ENCODE measurements at regions of chr1 and their contacts with region 1.

Region 1: GRCh38 chr1:92994105-92994712 is 32.9 kb upstream of the DIPK1A start:
- DNase-seq: peak; percentile 89
- ATAC-seq: peak; percentile 96
- H3K4me3 ChIP-seq: no peak overlapping the region
- H3K4me3 Mint-ChIP-seq: no peak overlapping the region
- H3K27ac ChIP-seq: no peak overlapping the region
- H3K27ac Mint-ChIP-seq: peak overlapping the region; percentile 76
- H3K4me1 ChIP-seq: peaks cover 35 to 41% of the 10 kb centered on the region in 2 donors
- H3K4me1 Mint-ChIP-seq: peaks cover 40% of the 10 kb centered on the region
- H3K27me3 ChIP-seq: no peaks in the 10 kb centered on the region
- H3K27me3 Mint-ChIP-seq: no peaks in the 10 kb centered on the region
- CTCF ChIP-seq: peak; percentile 87

Region 2: DNA sequence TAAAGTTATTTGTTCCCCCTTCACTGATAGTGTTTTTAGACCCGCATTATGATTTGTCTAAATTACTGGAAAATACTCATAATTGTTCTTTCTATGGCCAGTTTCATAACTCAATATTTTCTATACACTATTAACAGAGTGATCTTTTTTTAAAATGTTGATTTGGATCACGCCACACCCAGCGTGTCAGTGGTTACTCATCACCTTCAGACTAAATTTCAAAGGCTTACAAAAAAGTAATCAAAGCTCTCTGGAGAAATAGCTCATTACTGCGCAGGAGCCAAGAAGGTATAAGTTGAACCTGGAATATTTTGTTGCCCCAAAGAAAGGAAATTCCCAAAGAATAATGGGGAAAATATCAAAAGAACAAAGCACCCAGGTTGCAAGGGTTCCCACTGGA is 314.2 kb before region 1 on chr1:
- CTCF ChIA-PET with region 1: no interaction called
- POLR2A ChIA-PET with region 1: no interaction called
- intact Hi-C with region 1: no loop called
- DNase-seq: no peak
- ATAC-seq: no peak
- H3K4me3 ChIP-seq: no peak overlapping the region
- H3K4me3 Mint-ChIP-seq: no peak overlapping the region
- H3K27ac ChIP-seq: no peak overlapping the region
- H3K27ac Mint-ChIP-seq: no peak overlapping the region
- H3K4me1 ChIP-seq: no peaks in the 10 kb centered on the region
- H3K4me1 Mint-ChIP-seq: no peaks in the 10 kb centered on the region
- H3K27me3 ChIP-seq: no peaks in the 10 kb centered on the region
- H3K27me3 Mint-ChIP-seq: no peaks in the 10 kb centered on the region
- CTCF ChIP-seq: no peak

Region 3: DNA sequence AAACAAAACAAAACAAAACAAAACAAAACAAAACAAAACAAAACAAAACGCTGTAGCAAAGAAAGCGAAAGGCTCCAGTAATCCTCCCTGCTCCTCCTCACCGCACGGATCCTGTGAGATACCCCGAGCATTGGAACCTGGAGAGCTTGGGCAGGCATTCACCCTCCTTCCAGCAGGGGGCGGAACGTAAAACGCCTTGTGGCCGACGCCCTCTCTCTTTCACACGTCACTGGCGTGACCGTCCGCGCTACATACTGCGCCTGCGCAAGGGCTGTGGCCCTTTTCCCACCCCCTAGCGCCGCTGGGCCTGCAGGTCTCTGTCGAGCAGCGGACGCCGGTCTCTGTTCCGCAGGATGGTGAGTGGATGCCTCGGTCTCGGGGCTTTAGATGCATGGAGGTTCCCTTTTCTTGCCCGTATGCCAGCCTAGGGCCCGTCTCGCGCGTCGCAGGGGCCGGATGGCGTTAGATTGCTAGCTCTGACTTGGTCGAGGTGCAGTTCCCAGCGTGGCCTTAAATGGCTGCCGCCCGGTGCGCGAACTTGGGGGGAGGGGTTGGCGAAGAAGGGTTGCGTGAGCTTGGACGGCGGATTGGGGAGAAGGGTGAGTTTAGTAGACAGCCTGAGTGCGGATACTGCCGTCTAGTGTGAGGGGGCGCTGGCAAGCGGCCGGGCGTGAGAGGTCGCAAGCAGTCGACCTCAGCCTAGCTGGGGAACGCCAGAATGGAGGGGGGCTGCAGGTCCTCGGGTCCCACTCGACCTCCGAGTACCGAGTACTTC is 162.3 kb before region 1 on chr1 and contains the start of gene RPL5:
- CTCF ChIA-PET with region 1: interaction called, 17 read pairs
- POLR2A ChIA-PET with region 1: interaction called, 3 read pairs
- intact Hi-C with region 1: no loop called
- DNase-seq: peak; percentile 100
- ATAC-seq: peak; percentile 88
- H3K4me3 ChIP-seq: peak within 1 kb of the TSS; percentile 84 to 98 (median 92)
- H3K4me3 Mint-ChIP-seq: peak within 1 kb of the TSS; percentile 100
- H3K27ac ChIP-seq: peak within 1 kb of the TSS; percentile 90 to 96
- H3K27ac Mint-ChIP-seq: peak within 1 kb of the TSS; percentile 100
- H3K4me1 ChIP-seq: peaks cover 25 to 28% of the 10 kb centered on the region in 2 donors
- H3K4me1 Mint-ChIP-seq: peaks cover 47% of the 10 kb centered on the region
- H3K27me3 ChIP-seq: no peaks in the 10 kb centered on the region
- H3K27me3 Mint-ChIP-seq: no peaks in the 10 kb centered on the region
- CTCF ChIP-seq: peak; percentile 89
- total RNA-seq, gene RPL5: 1,049 and 1,104 TPM in 2 replicates

Region 4: GRCh38 chr1:92882819-92883218 is 111.4 kb before region 1 on chr1:
- CTCF ChIA-PET with region 1: interaction called, 15 read pairs
- POLR2A ChIA-PET with region 1: no interaction called
- intact Hi-C with region 1: no loop called
- DNase-seq: peak; percentile 43
- ATAC-seq: peak; percentile 54
- H3K4me3 ChIP-seq: no peak overlapping the region
- H3K4me3 Mint-ChIP-seq: peak overlapping the region; percentile 40
- H3K27ac ChIP-seq: peak overlapping the region in 1 of 2 donors; percentile 76
- H3K27ac Mint-ChIP-seq: peak overlapping the region; percentile 83
- H3K4me1 ChIP-seq: peaks cover 22 to 25% of the 10 kb centered on the region in 2 donors
- H3K4me1 Mint-ChIP-seq: peaks cover 45% of the 10 kb centered on the region
- H3K27me3 ChIP-seq: no peaks in the 10 kb centered on the region
- H3K27me3 Mint-ChIP-seq: no peaks in the 10 kb centered on the region
- CTCF ChIP-seq: no peak

Region 5: GRCh38 chr1:92929461-92929860 is 64.7 kb before region 1 on chr1:
- CTCF ChIA-PET with region 1: interaction called, 17 read pairs
- POLR2A ChIA-PET with region 1: no interaction called
- intact Hi-C with region 1: no loop called
- DNase-seq: no peak
- ATAC-seq: peak; percentile 43
- H3K4me3 ChIP-seq: peak overlapping the region in 2 of 5 experiments; percentile 8 to 29
- H3K4me3 Mint-ChIP-seq: peak overlapping the region; percentile 75
- H3K27ac ChIP-seq: peak overlapping the region; percentile 57 to 82
- H3K27ac Mint-ChIP-seq: peak overlapping the region; percentile 86
- H3K4me1 ChIP-seq: peaks cover 55 to 80% of the 10 kb centered on the region in 2 donors
- H3K4me1 Mint-ChIP-seq: peaks cover 73% of the 10 kb centered on the region
- H3K27me3 ChIP-seq: no peaks in the 10 kb centered on the region
- H3K27me3 Mint-ChIP-seq: no peaks in the 10 kb centered on the region
- CTCF ChIP-seq: no peak

Region 6: GRCh38 chr1:92968138-92969032 is 25.8 kb before region 1 on chr1:
- CTCF ChIA-PET with region 1: interaction called, 405 read pairs
- POLR2A ChIA-PET with region 1: interaction called, 6 read pairs
- intact Hi-C with region 1: loop called (anchors 1 kb)
- DNase-seq: peak; percentile 58
- ATAC-seq: peak; percentile 68
- H3K4me3 ChIP-seq: no peak overlapping the region
- H3K4me3 Mint-ChIP-seq: no peak overlapping the region
- H3K27ac ChIP-seq: no peak overlapping the region
- H3K27ac Mint-ChIP-seq: peak overlapping the region; percentile 29
- H3K4me1 ChIP-seq: peaks cover 50 to 60% of the 10 kb centered on the region in 2 donors
- H3K4me1 Mint-ChIP-seq: peaks cover 38% of the 10 kb centered on the region
- H3K27me3 ChIP-seq: no peaks in the 10 kb centered on the region
- H3K27me3 Mint-ChIP-seq: no peaks in the 10 kb centered on the region
- CTCF ChIP-seq: peak; percentile 70

Region 7: DNA sequence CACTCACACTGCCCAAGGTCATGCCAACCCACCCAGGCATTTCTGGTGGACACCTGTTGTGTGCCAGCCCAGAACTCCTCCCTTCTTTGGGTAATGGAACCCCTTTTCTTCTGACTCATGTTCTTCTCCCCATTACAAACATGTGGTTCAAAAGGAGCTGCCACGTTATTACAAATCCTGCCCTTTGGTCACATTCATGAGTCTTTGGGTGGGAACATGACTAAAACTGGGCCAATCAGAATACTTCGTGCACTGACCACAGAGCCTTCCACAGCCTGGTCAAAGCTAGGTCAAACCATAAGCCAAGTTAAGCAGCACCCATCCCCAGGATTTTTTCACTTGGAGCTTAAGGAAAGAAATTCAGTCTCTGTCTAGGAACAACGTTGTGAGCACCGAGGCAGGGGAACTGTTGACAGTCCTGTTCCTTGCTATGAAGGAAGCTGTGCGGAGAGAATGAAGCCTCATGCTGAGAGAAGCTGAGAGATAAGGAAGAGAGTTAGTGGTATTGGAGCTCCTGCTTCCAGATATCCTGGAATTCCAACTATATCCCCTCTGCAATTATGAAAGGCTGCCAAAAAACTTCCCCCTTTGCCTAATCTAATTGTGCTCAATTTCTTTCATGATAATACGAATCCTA is 13.8 kb after region 1 on chr1:
- CTCF ChIA-PET with region 1: interaction called, 29 read pairs
- POLR2A ChIA-PET with region 1: no interaction called
- intact Hi-C with region 1: no loop called
- DNase-seq: no peak
- ATAC-seq: no peak
- H3K4me3 ChIP-seq: no peak overlapping the region
- H3K4me3 Mint-ChIP-seq: no peak overlapping the region
- H3K27ac ChIP-seq: no peak overlapping the region
- H3K27ac Mint-ChIP-seq: no peak overlapping the region
- H3K4me1 ChIP-seq: peaks cover 13 to 14% of the 10 kb centered on the region in 2 donors
- H3K4me1 Mint-ChIP-seq: peaks cover 14% of the 10 kb centered on the region
- H3K27me3 ChIP-seq: no peaks in the 10 kb centered on the region
- H3K27me3 Mint-ChIP-seq: no peaks in the 10 kb centered on the region
- CTCF ChIP-seq: no peak

Measured in B cell (primary cell).